Right ventricle myocardium inferior (tissue), 1 donor: ENCODE measurements at regions of chr9 and their contacts with region 1.

Region 1: GRCh38 chr9:131393622-131394463 is at the start of gene PRRC2B:
- DNase-seq: peak; percentile 94
- ATAC-seq: peak; percentile 85
- total RNA-seq, gene PRRC2B: 142 TPM

Region 2: GRCh38 chr9:131330814-131331600 is 62.8 kb before region 1 on chr9:
- intact Hi-C with region 1: no loop called
- DNase-seq: no peak
- ATAC-seq: peak; percentile 17

Region 3: GRCh38 chr9:131349881-131350563 is 43.8 kb before region 1 on chr9:
- intact Hi-C with region 1: no loop called
- DNase-seq: peak; percentile 95
- ATAC-seq: peak; percentile 93

Region 4: GRCh38 chr9:131382850-131383729 is 10.8 kb before region 1 on chr9:
- intact Hi-C with region 1: loop called (anchors 1 kb)
- DNase-seq: no peak
- ATAC-seq: peak; percentile 97